ENCODE measurements at regions of chr2 and their contacts with region 1.

Region 1: DNA sequence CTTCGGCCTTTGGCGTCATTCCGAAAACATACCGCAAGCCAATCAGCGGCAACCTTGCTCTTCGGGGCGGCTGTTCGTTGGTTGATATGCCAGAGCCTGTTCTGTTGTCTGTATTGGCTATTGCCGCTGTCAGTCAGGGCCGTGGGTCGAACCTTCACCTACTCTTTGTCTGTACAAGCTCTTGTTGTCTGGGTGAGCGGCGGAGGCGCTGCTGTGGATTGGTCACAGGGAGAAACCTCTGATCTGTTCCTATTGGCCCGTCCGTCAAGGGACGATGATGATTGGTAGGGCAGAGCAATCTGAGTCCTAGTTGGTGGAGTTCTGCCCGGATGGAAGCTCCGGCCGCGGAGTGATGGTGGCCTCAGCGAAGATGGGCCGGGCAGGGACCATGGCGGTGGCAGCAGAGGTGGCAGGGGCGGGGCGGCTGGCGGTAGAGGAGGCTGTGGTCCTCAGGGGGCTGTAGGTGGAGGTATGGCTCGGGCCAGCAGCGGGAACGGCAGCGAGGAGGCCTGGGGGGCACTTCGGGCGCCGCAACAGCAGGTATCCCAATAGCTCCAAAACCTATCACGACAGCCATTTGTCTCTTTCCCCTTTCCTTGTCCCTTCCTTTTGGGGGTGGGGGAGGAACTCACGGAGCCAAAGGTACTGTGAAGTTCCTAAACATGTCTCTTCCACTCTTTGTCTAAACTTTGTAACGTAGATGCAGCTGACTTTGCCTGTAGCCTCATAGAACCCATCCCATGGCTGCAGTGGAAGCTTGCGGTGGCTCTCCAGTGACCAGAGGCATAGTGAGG is at the start of gene WBP1:
- DNase-seq: peak; percentile 100
- H3K4me3 Mint-ChIP-seq: peak within 1 kb of the TSS; percentile 92
- H3K27ac Mint-ChIP-seq: peak within 1 kb of the TSS; percentile 99
- H3K4me1 Mint-ChIP-seq: peaks cover 43% of the 10 kb centered on the region
- H3K27me3 Mint-ChIP-seq: no peaks in the 10 kb centered on the region
- total RNA-seq, gene WBP1: 39.4 to 40.0 TPM

Region 2: DNA sequence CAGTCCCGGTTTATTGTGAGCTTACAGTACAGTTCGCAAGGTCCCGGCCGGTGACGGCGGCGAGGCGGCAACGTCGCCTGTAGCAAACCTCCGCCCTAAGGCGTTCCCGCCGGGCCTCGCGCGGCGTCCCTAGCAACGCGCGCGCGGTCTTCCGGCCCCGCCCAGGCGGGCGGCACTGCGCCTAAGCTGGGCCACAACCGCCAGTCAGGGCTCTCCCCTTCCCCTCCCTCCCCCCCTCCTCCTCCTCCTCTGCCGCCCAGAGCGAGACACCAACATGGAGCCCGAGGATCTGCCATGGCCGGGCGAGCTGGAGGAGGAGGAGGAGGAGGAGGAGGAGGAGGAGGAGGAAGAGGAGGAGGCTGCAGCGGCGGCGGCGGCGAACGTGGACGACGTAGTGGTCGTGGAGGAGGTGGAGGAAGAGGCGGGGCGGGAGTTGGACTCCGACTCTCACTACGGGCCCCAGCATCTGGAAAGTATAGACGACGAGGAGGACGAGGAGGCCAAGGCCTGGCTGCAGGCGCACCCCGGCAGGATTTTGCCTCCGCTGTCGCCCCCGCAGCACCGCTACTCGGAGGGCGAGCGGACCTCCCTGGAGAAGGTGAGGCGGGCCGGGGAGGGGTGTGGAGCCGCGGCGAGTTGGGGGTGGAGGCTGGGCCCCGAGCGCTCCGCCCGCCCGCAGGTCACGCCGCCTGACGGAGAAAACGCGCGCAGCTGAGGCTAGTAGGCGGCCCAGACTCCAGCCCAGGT is 1072.6 kb before region 1 on chr2 and contains the start of gene ALMS1:
- CTCF ChIA-PET with region 1: no interaction called
- intact Hi-C with region 1: loop called (anchors 1 kb)
- DNase-seq: peak; percentile 91
- H3K4me3 Mint-ChIP-seq: peak within 1 kb of the TSS; percentile 92
- H3K27ac Mint-ChIP-seq: peak within 1 kb of the TSS; percentile 86
- H3K4me1 Mint-ChIP-seq: peaks cover 28% of the 10 kb centered on the region
- H3K27me3 Mint-ChIP-seq: no peaks in the 10 kb centered on the region
- total RNA-seq, gene ALMS1: 15.4 to 15.8 TPM

Region 3: GRCh38 chr2:74178201-74179062 is 279.9 kb before region 1 on chr2 and contains the start of gene MOB1A:
- CTCF ChIA-PET with region 1: no interaction called
- intact Hi-C with region 1: loop called (anchors 2 kb)
- DNase-seq: peak; percentile 99
- H3K4me3 Mint-ChIP-seq: peak within 1 kb of the TSS; percentile 84
- H3K27ac Mint-ChIP-seq: peak within 1 kb of the TSS; percentile 86
- H3K4me1 Mint-ChIP-seq: peaks cover 44% of the 10 kb centered on the region
- H3K27me3 Mint-ChIP-seq: no peaks in the 10 kb centered on the region
- total RNA-seq, gene MOB1A: 129 to 131 TPM

Region 4: DNA sequence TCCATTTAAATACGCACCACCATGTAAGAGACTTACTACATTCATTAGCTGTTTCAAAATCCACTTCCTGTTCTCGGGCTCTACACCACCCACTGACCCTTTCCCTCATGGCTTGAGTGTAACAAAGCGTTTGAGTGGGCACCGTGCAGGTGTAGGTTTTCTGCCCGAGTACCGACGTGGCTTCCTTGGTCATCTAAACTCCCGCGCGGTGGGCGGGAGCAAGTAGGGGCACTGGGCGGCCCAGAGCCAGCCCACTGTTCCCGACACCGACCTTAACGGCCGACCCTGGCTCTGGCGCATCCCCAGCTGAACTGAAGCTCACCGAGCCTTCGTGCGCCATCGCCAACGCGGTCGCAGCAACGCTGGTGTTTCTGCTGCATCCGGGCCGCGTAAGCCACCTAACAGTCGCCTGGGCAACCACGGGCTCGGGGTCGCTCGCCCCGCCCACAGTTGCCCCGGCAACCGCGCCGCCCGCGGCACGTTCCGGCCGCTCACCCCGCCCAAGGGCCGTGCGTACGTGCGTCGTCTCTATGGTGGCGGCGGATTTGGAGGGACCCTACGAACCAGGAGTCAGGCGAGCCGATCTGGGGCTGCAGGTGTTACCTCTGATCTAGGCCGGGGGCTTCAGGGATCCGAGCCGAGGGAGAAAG is 37.0 kb before region 1 on chr2 and contains the starts of genes C2orf81 and WDR54:
- CTCF ChIA-PET with region 1: no interaction called
- intact Hi-C with region 1: loop called (anchors 1 kb)
- DNase-seq: peak; percentile 90
- H3K4me3 Mint-ChIP-seq: peak within 1 kb of the TSS; percentile 99
- H3K27ac Mint-ChIP-seq: peak within 1 kb of the TSS; percentile 88
- H3K4me1 Mint-ChIP-seq: peaks cover 24% of the 10 kb centered on the region
- H3K27me3 Mint-ChIP-seq: no peaks in the 10 kb centered on the region
- total RNA-seq, gene C2orf81: 2.6 to 3.4 TPM
- total RNA-seq, gene WDR54: 67.2 to 70.8 TPM

Region 5: DNA sequence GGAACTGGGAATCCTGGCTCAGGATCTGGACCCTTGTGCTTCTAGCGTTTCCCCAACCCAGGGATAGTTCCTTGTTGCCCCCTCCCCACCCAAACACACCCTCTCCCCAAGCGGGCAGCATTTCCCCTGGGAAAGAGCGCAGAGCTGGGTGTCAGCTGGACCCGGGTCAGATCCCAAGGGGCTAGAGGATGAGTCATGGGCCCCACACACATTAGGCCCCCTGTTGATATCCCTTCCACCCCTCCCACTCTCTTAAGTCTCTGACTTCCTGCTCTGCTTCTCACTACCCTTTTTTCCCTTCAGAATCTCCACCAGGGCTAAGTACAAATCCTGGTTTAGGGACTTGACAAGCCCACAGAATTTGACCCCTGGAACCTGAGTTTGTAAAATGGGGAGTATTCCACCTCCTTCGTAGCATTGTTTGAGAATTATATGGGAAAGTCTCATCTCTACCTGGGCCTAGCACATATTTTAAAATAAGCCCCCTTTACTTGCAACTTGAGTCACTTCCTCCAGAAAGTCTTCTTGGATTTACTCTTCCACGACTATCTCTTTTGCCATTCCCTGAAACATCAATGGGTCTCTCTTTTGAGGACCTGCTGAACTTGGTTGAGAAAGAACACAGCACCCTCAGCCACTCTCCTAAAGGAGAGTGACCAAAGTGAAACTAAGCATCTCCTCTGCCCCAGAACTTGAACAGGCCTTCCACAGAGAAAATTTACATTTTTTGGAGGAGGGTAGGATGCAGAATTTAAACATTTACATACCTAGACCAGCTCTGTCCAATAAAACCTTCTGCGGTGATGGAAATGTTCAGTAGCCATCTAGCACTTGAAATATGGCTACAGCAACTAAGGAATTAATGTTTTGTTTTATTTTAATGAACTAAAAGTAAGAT is 21.3 kb before region 1 on chr2:
- CTCF ChIA-PET with region 1: no interaction called
- intact Hi-C with region 1: no loop called
- DNase-seq: no peak
- H3K4me3 Mint-ChIP-seq: no peak overlapping the region
- H3K27ac Mint-ChIP-seq: no peak overlapping the region
- H3K4me1 Mint-ChIP-seq: peaks cover 11% of the 10 kb centered on the region
- H3K27me3 Mint-ChIP-seq: peaks cover 25% of the 10 kb centered on the region

Region 6: DNA sequence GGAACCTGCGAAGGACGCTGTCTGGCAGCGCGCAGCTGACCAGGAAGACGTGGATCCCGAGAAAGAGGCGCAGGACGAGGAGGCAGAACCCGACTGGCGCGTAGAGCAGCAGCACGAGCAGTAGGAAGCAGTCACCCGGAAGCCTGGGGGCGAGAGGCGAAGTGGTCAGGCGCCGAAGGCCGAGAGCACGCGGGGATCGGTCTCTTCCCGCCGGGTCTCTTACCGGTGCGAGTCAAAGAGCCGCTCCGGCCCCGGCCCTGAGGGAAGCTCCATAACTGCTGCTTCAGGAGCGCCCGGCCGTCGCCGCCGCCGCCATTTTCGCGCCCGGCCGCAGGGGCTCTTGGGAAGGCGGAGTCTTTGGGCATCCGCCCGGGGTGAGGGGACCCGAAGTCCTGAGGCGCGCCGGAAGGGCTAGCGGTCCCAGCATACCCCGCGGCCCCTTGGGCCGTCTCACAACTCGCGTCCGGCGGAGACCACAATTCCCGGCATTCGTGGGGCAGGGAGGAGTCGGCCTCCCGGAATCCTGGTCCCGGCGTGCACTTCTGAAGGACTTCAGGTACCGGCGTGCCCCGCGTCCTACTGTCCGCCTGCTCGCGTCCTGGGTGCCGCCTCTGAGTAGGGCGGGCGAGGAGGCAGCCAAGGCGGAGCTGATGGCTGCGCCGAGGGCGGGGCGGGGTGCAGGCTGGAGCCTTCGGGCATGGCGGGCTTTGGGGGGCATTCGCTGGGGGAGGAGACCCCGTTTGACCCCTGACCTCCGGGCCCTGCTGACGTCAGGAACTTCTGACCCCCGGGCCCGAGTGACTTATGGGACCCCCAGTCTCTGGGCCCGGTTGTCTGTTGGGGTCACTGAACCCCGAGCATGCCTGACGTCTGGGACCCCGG is 71.3 kb after region 1 on chr2 and contains the starts of genes AUP1 and HTRA2:
- CTCF ChIA-PET with region 1: interaction called, 3 read pairs
- intact Hi-C with region 1: loop called (anchors 1 kb)
- DNase-seq: peak; percentile 96
- H3K4me3 Mint-ChIP-seq: peak within 1 kb of the TSS; percentile 98
- H3K27ac Mint-ChIP-seq: peak within 1 kb of the TSS; percentile 91
- H3K4me1 Mint-ChIP-seq: peaks cover 40% of the 10 kb centered on the region
- H3K27me3 Mint-ChIP-seq: no peaks in the 10 kb centered on the region
- total RNA-seq, gene AUP1: 77.4 to 78.5 TPM
- total RNA-seq, gene HTRA2: 39.0 to 39.7 TPM

Region 7: GRCh38 chr2:74845217-74846011 is 387.1 kb after region 1 on chr2:
- CTCF ChIA-PET with region 1: no interaction called
- intact Hi-C with region 1: loop called (anchors 5 kb)
- DNase-seq: peak; percentile 61
- H3K4me3 Mint-ChIP-seq: no peak overlapping the region
- H3K27ac Mint-ChIP-seq: peak overlapping the region; percentile 33
- H3K4me1 Mint-ChIP-seq: peaks cover 95% of the 10 kb centered on the region
- H3K27me3 Mint-ChIP-seq: no peaks in the 10 kb centered on the region